ENCODE measurements at regions of chr11 and their contacts with region 1.

Region 1: GRCh38 chr11:35126000-35126878 is 12.7 kb upstream of the CD44 start:
- DNase-seq: peak; percentile 81
- ATAC-seq: peak; percentile 84
- H3K4me3 Mint-ChIP-seq: peak overlapping the region; percentile 31
- H3K27ac Mint-ChIP-seq: peak overlapping the region; percentile 80
- H3K4me1 Mint-ChIP-seq: peaks cover 66% of the 10 kb centered on the region
- H3K27me3 Mint-ChIP-seq: no peaks in the 10 kb centered on the region
- CTCF ChIP-seq: peak; percentile 37

Region 2: DNA sequence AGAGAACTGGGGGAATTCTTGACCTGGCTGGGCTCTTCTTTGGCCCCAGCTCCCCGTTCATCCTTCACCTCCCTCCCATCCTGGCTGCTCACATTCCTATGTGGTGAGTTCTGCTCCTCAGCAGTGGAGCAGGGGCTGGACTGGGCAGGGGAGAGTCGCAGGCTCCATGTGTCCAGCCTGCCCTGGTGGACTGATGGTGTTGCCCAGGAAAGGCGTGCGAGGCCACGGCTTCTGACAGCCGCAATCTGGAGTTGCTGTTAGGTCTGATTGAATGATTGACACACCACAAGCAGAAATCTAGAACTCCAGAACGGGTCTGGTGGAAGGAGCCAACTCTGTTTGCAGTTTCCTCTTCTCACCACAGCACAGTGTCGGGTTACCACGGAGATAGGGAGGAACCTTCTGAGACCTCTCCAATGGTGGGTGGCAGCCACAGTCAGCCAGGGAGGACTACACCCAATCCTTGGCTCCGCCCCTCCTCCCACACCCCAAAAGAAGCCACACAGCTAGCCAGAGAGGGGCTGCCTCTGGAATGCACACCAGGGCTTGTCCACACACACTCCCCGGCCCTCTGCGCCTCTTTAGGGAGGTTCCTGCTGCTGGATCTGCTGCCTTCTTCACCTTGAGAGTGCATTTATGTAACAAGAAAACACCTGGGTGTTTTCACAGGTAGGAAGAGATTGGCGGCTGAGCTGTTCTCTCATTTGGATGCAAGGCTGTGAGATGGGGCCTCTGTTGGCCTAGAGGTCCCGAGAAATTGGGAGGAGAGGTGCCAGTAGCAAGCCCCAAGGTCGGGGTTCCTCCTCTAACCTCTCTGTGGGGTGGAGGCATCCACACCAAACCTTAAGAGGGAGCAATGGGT is 43.7 kb before region 1 on chr11:
- CTCF ChIA-PET with region 1: no interaction called
- POLR2A ChIA-PET with region 1: no interaction called
- intact Hi-C with region 1: loop called (anchors 2 kb)
- DNase-seq: peak; percentile 93
- ATAC-seq: peak; percentile 80
- H3K4me3 Mint-ChIP-seq: peak overlapping the region; percentile 58
- H3K27ac Mint-ChIP-seq: peak overlapping the region; percentile 89
- H3K4me1 Mint-ChIP-seq: peaks cover 80% of the 10 kb centered on the region
- H3K27me3 Mint-ChIP-seq: no peaks in the 10 kb centered on the region
- CTCF ChIP-seq: no peak

Measured in activated CD8-positive, alpha-beta T cell treated with anti-CD3 and anti-CD28 coated beads for 36 hours (primary cell).